Heart right ventricle (tissue), 16 donors: ENCODE measurements at regions of chr2 and their contacts with region 1.

Region 1: DNA sequence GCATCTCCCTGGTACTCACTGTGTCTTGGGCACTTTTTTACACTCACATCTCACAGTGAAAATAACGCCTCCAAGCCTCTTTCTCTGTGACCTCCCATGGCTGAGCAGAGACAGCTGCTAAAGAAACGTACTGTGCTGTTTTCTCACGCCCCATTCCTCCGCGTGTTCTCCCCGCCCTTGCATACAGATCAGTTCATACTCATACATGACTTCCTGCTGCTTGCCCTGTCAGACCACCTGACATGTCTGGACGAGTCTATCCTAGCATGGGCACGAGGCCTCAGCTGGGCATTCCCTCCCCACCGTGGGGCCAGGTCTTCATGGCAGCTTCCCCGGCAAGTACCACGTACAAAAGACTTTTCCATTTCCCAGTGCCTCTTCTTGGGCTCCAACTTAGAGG is 21.2 kb upstream of the IL1A start:
- DNase-seq: no peak
- ATAC-seq: no peak
- H3K4me3 ChIP-seq: no peak overlapping the region
- H3K27ac ChIP-seq: no peak overlapping the region
- H3K4me1 ChIP-seq: no peaks in the 10 kb centered on the region
- H3K27me3 ChIP-seq: no peaks in the 10 kb centered on the region
- CTCF ChIP-seq: no peak

Region 2: DNA sequence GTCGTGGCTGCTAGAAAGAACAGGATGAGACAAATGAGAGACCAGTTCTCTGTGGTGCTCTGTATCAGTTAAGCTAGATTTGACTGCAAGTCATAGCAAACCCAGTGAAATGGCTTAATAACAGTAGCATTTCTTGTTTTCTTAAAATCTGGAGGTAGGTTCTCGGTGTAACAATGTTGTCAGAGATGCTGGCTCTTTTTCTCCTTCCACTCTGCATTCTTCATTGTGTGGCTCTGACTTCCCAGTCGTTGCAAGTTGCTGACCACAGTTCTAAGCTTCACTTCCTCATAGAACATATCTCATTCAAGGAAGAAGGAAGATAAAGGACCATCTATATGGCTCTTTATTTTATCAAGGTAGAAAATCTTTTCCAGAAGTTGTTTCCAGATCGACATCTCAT is 33.2 kb before region 1 on chr2:
- intact Hi-C with region 1: loop called in 3 of 10 experiments (anchors 5 kb)
- DNase-seq: no peak
- ATAC-seq: no peak
- H3K4me3 ChIP-seq: no peak overlapping the region
- H3K27ac ChIP-seq: no peak overlapping the region
- H3K4me1 ChIP-seq: peaks cover 0 to 24% (median 0%) of the 10 kb centered on the region in 9 donors
- H3K27me3 ChIP-seq: no peaks in the 10 kb centered on the region
- CTCF ChIP-seq: no peak

Region 3: DNA sequence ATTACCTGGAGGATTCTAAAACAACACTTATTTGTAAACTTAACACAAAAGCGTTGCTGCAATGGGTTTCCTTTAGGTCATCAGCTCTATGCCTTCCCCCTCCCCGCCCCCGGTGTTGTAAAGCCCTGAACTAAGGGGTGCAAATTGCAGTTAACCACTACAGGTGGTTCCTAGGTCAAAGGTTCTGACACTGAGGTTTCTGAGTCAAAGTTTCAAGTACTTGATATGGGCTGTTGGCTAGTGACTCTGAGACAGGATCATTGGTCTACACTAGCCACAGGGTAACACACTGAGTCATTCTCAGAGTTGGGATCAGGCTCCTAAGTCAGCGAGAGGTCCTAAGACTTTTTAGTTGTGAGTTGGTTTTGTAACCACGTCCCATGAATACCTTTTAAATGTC is 15.6 kb after region 1 on chr2:
- intact Hi-C with region 1: no loop called
- DNase-seq: no peak
- ATAC-seq: no peak
- H3K4me3 ChIP-seq: no peak overlapping the region
- H3K27ac ChIP-seq: no peak overlapping the region
- H3K4me1 ChIP-seq: peaks cover 0 to 11% (median 3%) of the 10 kb centered on the region in 9 donors
- H3K27me3 ChIP-seq: peaks cover 0 to 6% (median 0%) of the 10 kb centered on the region in 7 donors
- CTCF ChIP-seq: no peak